ENCODE measurements at regions of chr6 and their contacts with region 1.

Region 1: GRCh38 chr6:160013987-160014868 is 45.3 kb downstream of the IGF2R start:
- DNase-seq: no peak
- ATAC-seq: no peak

Region 2: GRCh38 chr6:160051390-160051789 is 37.2 kb after region 1 on chr6:
- intact Hi-C with region 1: loop called (anchors 1 kb)
- DNase-seq: no peak
- ATAC-seq: no peak

Region 3: DNA sequence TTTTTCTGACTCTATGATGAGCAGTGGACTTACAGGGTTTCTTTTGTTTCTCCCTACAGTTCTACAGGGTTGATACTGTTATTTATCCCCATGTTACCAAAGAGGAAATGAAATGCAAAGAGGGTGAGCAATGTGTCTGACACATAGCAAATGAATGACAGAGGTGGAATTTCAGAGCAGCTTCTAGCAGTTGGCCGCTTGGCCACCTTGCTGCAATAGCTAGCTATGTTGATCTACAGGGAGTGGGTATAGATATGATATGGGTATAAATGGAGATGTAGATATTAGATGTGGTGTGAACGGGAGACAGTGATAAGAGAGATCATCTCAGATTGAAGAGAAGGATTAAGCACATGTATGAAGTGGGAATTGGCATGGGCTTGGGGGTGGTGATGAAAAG is 323.1 kb after region 1 on chr6:
- intact Hi-C with region 1: no loop called
- DNase-seq: no peak
- ATAC-seq: no peak

Measured in sciatic nerve (tissue), 2 donors.